Calu3 (cell line): ENCODE measurements at regions of chr14 and their contacts with region 1.

Region 1: GRCh38 chr14:25150934-25151790 is 101.2 kb upstream of the STXBP6 start:
- DNase-seq: no peak
- H3K4me3 Mint-ChIP-seq: no peak overlapping the region
- H3K27ac Mint-ChIP-seq: no peak overlapping the region
- H3K4me1 Mint-ChIP-seq: peaks cover 5% of the 10 kb centered on the region
- H3K27me3 Mint-ChIP-seq: peaks cover 18% of the 10 kb centered on the region
- CTCF ChIP-seq: peak; percentile 21

Region 2: DNA sequence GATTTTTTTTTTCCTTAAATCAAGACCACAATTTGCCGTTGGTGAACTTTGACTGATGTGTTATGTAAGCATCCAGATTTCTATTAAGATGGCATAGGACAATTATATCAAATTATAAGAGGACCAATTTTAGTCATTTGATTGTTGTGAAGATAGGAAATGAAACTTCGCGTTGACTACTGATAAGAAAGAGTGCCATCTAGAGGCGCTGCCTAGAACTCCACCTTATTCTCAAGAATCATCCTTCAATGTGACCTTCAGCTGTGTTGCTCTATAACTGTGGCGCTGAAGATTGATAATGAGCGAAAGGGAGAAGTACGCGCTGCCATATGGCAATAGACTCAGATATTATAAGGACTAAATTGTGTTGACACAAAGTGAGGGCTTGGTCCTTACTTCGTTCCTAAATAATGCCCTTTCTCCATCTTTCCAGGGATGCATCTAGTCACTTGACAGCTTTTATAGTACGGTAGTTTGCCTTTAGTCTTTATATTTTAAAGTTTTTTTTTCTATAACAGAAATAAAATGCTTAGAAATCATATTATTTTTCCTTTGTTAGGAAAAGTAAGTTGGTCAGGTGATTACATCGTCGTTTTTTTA is 249.5 kb after region 1 on chr14:
- CTCF ChIA-PET with region 1: no interaction called
- intact Hi-C with region 1: loop called (anchors 10 kb)
- DNase-seq: peak; percentile 40
- H3K4me3 Mint-ChIP-seq: no peak overlapping the region
- H3K27ac Mint-ChIP-seq: no peak overlapping the region
- H3K4me1 Mint-ChIP-seq: no peaks in the 10 kb centered on the region
- H3K27me3 Mint-ChIP-seq: no peaks in the 10 kb centered on the region
- CTCF ChIP-seq: peak; percentile 50